ENCODE measurements at regions of chr1 and their contacts with region 1.

Region 1: DNA sequence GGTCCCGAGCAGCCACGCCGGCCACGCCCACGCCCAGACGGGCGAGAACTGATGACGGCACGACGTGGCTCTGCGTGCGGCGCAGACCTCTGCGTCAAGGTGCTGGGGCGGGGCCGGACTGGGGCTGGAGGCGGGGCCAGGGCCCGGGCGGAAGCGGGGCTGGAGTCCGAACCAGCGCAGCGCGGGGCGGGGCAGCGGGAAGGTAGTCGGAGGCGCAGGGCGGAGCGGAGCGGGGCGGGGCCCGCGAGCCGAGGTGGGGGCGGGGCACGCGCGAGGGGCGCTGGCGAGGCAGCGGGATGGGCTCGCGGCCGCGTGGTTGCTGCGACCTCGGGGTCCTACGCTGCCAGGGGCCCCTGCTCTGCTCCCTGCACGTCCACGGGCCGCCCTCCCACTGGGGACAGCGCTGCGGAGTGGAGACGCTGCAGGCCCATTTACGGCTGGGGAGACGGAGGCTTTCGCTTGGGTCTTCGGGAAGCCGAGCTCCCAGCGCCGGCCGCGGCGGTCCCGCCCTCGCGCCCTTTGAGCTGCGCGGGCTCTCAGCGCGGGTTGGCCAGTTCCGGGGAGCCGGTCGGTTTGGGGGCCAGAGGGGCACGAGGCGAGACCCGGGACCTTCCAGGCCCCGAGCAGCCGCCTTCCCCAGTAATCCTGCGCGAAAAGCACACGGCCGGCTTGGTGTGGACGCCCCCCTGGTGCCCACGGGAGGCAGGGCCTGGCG is at the start of gene PEX10:
- DNase-seq: no peak
- H3K4me3 ChIP-seq: peak within 1 kb of the TSS; percentile 71 to 79
- H3K27ac ChIP-seq: peak within 1 kb of the TSS; percentile 82
- H3K4me1 ChIP-seq: peaks cover 27% of the 10 kb centered on the region
- H3K27me3 ChIP-seq: no peaks in the 10 kb centered on the region
- CTCF ChIP-seq: peak in 1 of 3 experiments; percentile 16
- POLR2A ChIP-seq: peak in 1 of 2 donors; percentile 50
- total RNA-seq, gene PEX10: 15.2 TPM

Region 2: DNA sequence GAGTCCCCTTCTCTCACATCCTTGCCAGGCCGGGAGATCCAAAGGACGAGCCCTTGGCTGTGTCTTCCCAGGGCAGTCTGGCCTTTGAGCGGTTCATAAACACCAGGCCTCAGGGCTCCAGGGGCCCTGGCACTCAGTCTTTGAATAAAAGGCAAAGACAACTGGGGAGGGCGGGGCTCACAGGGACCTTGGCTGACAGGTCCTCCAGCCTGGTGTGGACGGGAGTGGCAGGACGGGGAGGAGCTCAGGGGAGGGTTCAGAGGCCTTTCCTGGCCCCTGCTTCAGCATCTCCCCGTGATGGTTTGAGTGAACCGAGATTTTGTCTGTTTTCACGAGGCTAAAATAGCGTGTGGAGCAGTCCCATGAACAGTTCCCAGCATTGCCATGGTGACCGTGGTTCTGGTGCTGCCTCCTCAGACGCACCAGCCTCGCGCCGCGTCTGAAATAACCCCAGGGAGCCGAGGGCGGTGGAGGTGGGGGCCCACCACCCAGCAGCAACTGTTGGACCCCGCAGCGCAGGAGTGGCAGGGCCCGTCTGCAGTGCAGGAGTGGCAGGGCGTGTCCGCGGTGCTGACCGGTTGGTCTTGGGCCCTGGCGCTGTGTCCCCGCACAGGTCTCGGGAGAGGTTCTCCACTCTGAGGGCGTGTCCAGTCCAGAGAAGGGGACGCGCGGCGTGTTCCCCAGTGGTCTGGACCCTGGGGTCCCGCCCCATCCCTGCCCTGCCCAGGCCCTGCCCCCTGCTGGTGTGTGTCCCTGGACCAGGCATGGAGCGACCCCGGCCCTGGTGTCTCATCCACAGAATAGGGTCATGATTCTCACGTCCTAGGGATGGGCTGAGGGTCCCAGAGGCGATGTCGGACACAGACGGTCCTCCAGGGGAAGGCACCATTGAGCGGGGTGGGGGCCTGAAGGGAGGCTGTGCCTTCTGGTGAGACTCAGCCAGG is 369.6 kb before region 1 on chr1:
- intact Hi-C with region 1: no loop called
- DNase-seq: no peak
- H3K4me3 ChIP-seq: no peak overlapping the region
- H3K27ac ChIP-seq: no peak overlapping the region
- H3K4me1 ChIP-seq: peaks cover 19% of the 10 kb centered on the region
- H3K27me3 ChIP-seq: no peaks in the 10 kb centered on the region
- CTCF ChIP-seq: no peak
- POLR2A ChIP-seq: no peak

Region 3: DNA sequence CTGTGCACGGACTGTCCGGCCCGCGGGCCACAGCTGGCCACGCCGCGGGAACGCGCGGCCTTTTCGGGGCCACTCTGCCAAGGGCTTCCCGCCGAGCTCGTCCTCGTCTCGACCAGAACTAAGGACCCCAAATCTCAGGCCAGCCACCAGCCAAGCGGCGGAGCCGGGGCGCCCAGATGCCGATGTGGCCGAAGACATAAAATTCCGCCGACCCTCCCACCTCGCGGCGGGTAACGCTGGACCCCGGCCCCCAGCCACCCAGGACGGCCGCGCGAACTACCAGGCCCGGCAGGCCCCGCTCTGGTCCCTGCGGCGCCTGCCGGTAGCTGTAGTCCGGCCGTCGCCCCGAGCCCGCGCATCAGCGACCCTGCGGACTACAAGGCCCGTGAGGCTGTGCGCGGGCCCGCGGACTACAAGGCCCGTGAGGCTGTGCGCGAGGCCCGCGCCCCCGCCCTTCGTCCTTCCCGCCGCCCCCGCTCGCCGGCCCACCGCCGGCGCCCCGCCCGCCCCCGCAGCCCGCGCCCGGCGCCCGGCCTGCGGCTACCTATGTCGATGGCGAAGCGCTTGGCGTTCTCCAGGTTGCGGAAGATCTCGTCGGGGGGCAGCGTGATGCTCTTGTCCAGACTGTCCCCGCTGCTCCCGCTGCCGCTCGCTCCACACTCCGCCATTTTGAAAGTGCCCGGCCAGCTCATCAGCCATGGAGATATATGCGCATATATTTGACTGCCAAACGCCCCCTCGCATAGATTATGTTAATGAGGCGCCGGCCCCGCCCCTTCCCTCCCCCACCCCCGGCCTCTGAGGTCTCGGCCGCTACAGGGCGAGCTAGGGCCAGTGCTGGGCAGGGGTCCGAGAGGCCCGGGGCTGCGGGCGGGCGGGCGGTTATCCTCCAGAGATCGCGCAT is 113.5 kb after region 1 on chr1 and contains the start of gene PANK4:
- intact Hi-C with region 1: loop called (anchors 5 kb)
- DNase-seq: peak in 1 of 2 donors; percentile 91
- H3K4me3 ChIP-seq: peak within 1 kb of the TSS; percentile 81 to 87
- H3K27ac ChIP-seq: peak within 1 kb of the TSS; percentile 81
- H3K4me1 ChIP-seq: peaks cover 66% of the 10 kb centered on the region
- H3K27me3 ChIP-seq: no peaks in the 10 kb centered on the region
- CTCF ChIP-seq: no peak
- POLR2A ChIP-seq: peak in 1 of 2 donors; percentile 61
- total RNA-seq, gene PANK4: 39.5 TPM

Region 4: GRCh38 chr1:2545759-2546514 is 133.3 kb after region 1 on chr1:
- intact Hi-C with region 1: loop called (anchors 2 kb)
- DNase-seq: peak in 1 of 2 donors; percentile 95
- H3K4me3 ChIP-seq: peak overlapping the region; percentile 47 to 53
- H3K27ac ChIP-seq: peak overlapping the region; percentile 92
- H3K4me1 ChIP-seq: peaks cover 62% of the 10 kb centered on the region
- H3K27me3 ChIP-seq: no peaks in the 10 kb centered on the region
- CTCF ChIP-seq: no peak
- POLR2A ChIP-seq: no peak

Region 5: DNA sequence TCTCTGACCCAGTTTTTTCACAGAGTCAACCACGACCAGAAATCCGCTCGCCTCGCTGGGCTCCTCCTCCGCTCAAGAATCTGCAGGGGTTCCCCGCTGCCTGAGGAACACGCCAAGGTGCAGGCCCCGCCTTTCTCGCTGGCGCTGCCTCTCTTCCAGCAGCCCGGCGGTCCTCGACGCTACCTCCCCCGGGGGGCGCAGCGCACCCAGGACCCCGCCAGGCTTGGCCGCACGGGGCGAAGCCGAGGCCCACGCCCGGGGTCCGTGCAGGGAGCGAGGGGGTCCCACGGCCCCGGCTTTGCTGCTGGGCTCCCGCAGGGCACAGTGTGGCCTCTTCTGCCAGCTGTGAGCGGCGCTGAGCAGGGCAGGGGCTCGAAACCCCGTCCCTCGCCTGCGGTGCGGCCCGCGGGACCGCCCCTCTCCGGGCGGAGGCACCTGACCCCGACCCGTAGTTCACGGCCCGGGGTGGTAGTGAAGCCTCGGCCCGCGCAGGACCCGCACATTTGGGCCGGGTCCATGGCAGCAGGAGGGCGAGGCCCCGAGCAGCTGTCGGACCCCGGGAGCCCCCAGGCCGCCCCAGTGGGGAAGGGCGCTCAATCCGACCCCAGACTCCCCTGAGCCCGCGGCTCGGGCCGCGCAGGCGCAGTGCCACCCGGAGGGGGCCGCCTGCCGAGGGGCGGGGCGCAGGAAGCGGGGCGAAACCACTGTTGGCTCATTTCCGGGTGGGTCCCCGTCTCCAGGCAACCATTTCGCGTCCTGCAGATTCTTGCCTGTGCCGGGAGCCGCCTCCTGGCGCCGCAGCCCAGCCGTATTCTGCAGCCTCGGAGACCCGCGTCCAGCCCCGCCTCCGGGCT is 230.1 kb after region 1 on chr1:
- intact Hi-C with region 1: loop called (anchors 10 kb)
- DNase-seq: no peak
- H3K4me3 ChIP-seq: peak overlapping the region; percentile 81 to 85
- H3K27ac ChIP-seq: peak overlapping the region; percentile 84
- H3K4me1 ChIP-seq: peaks cover 25% of the 10 kb centered on the region
- H3K27me3 ChIP-seq: no peaks in the 10 kb centered on the region
- CTCF ChIP-seq: no peak
- POLR2A ChIP-seq: peak in 1 of 2 donors; percentile 75

Region 6: DNA sequence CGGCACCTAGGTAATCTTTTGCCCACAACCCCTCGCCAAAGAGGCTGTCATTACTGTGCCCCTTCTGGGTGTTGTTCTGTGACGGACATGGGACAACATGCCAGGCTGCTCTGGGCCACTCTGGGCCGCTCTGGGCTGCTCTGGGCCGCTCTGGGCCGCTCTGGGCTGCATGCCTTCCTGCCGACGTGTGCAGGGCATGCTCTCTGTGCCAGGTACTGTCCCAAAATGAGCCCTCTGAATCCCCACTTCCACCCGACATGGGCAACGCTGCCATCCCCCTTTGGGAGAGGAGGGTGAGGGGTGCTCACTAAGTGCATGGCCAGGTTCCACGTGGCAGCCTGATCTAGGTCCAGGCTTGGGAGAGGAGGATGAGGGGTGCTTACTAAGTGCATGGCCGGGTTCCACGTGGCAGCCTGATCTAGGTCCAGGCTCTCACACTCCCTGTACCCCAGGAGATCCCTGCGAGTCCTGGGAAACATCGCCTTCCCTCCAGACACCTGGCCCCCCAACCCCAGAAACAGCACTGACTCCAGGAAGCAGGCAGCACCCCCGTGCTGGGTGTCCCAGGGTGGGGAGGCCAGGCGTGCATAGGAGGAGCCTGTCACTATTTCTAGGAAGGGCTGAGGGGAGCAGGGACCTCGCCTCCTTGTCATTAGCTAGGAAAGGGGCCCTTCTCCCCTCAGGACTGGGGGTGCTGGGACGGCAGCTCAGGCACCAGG is 372.3 kb after region 1 on chr1:
- intact Hi-C with region 1: loop called (anchors 5 kb)
- DNase-seq: no peak
- H3K4me3 ChIP-seq: no peak overlapping the region
- H3K27ac ChIP-seq: no peak overlapping the region
- H3K4me1 ChIP-seq: no peaks in the 10 kb centered on the region
- H3K27me3 ChIP-seq: peaks cover 4% of the 10 kb centered on the region
- CTCF ChIP-seq: no peak
- POLR2A ChIP-seq: no peak

Region 7: GRCh38 chr1:2801535-2802291 is 389.0 kb after region 1 on chr1 and contains the start of gene TTC34:
- intact Hi-C with region 1: loop called (anchors 10 kb)
- DNase-seq: no peak
- H3K4me3 ChIP-seq: no peak within 1 kb of the TSS
- H3K27ac ChIP-seq: no peak within 1 kb of the TSS
- H3K4me1 ChIP-seq: no peaks in the 10 kb centered on the region
- H3K27me3 ChIP-seq: no peaks in the 10 kb centered on the region
- CTCF ChIP-seq: no peak
- POLR2A ChIP-seq: no peak
- total RNA-seq, gene TTC34: under 0.01 TPM

Region 8: GRCh38 chr1:3417082-3417739 is 1004.5 kb after region 1 on chr1:
- intact Hi-C with region 1: loop called (anchors 5 kb)
- DNase-seq: no peak
- H3K4me3 ChIP-seq: no peak overlapping the region
- H3K27ac ChIP-seq: no peak overlapping the region
- H3K4me1 ChIP-seq: no peaks in the 10 kb centered on the region
- H3K27me3 ChIP-seq: no peaks in the 10 kb centered on the region
- CTCF ChIP-seq: no peak
- POLR2A ChIP-seq: no peak